ENCODE measurements at regions of chr9 and their contacts with region 1.

Region 1: GRCh38 chr9:89428901-89429890 is 68.7 kb downstream of the SEMA4D start:
- DNase-seq: no peak
- H3K4me3 ChIP-seq: no peak overlapping the region
- H3K27ac ChIP-seq: no peak overlapping the region
- H3K4me1 ChIP-seq: peaks cover 4% of the 10 kb centered on the region
- H3K27me3 ChIP-seq: no peaks in the 10 kb centered on the region
- CTCF ChIP-seq: no peak

Region 2: GRCh38 chr9:88829276-88829675 is 599.9 kb before region 1 on chr9:
- intact Hi-C with region 1: no loop called
- DNase-seq: no peak
- H3K4me3 ChIP-seq: no peak overlapping the region
- H3K27ac ChIP-seq: no peak overlapping the region
- H3K4me1 ChIP-seq: no peaks in the 10 kb centered on the region
- H3K27me3 ChIP-seq: no peaks in the 10 kb centered on the region
- CTCF ChIP-seq: no peak

Region 3: DNA sequence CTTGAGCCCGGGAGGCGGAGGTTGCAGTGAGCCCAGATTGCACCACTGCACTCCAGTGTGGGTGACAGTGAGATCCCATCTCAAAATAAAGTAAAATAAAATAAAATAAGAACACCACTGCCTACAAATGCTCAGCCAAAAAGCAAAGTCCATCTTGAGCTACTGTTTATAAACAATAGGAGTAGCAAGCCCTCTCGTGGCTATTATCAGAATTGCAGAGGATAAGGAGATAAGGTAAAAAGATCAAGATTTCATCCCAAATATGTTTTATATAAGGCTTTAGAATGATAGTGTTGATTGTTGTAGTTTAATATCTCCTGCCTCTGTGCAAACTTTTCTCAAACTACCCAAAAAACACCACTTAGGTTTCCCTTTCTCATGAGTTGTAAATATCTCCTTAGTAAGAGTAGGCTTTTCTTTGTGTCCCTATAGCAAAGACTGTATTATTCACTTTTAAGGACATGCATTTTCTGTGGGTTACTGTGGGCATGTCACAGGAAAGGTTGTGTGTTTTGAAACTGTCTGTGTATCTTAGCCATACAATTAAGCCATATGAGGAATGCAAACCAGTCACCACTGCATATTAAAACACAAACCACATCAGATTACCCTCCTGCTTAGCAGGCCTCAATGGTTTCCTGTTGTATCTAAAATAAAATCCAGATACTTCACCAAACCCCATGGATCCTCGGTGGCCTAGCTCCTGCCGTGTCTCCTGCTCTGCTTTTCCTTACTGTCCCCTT is 150.0 kb before region 1 on chr9:
- intact Hi-C with region 1: no loop called
- DNase-seq: peak; percentile 27
- H3K4me3 ChIP-seq: no peak overlapping the region
- H3K27ac ChIP-seq: no peak overlapping the region
- H3K4me1 ChIP-seq: no peaks in the 10 kb centered on the region
- H3K27me3 ChIP-seq: no peaks in the 10 kb centered on the region
- CTCF ChIP-seq: peak; percentile 79

Region 4: DNA sequence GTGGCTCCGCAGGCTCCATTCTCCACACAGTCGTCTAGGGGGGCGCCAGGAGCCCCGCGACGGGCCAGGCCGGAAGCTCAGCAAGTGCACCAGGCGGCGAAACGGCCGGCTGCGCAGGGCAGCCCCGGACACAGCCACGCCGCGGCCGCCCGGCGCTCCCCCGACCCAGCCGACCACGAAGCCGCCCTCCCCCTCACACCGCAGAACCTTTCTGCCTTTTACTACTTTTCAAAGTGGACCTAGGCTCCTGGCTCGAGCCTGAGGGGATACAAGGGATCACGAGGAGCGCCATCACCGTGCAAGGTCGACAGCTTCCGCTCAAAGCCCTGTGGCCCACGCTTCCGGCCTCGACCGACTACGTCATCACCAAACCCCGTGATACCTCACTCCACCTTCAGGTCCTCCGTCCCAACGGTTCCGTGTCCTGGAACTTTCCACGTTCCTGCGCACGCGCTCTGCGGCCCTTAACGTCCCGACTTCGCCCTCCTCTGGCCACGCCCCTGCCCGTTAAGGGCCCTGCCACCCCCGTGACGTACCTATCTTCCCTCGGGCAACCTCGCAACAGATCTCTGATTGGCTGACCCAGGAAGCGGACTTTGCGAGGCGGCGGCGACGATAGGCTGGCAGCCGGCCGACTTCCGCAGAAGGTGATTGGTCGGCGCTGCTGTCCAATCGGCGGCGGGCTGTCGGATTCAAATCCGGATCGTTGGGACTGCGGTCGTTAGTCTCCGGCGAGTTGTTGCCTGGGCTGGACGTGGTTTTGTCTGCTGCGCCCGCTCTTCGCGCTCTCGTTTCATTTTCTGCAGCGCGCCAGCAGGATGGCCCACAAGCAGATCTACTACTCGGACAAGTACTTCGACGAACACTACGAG is 118.5 kb before region 1 on chr9 and contains the start of gene CKS2:
- intact Hi-C with region 1: no loop called
- DNase-seq: peak; percentile 100
- H3K4me3 ChIP-seq: peak within 1 kb of the TSS; percentile 76
- H3K27ac ChIP-seq: peak within 1 kb of the TSS; percentile 99
- H3K4me1 ChIP-seq: no peaks in the 10 kb centered on the region
- H3K27me3 ChIP-seq: no peaks in the 10 kb centered on the region
- CTCF ChIP-seq: no peak
- total RNA-seq, gene CKS2: 42.4 to 134 TPM

Region 5: DNA sequence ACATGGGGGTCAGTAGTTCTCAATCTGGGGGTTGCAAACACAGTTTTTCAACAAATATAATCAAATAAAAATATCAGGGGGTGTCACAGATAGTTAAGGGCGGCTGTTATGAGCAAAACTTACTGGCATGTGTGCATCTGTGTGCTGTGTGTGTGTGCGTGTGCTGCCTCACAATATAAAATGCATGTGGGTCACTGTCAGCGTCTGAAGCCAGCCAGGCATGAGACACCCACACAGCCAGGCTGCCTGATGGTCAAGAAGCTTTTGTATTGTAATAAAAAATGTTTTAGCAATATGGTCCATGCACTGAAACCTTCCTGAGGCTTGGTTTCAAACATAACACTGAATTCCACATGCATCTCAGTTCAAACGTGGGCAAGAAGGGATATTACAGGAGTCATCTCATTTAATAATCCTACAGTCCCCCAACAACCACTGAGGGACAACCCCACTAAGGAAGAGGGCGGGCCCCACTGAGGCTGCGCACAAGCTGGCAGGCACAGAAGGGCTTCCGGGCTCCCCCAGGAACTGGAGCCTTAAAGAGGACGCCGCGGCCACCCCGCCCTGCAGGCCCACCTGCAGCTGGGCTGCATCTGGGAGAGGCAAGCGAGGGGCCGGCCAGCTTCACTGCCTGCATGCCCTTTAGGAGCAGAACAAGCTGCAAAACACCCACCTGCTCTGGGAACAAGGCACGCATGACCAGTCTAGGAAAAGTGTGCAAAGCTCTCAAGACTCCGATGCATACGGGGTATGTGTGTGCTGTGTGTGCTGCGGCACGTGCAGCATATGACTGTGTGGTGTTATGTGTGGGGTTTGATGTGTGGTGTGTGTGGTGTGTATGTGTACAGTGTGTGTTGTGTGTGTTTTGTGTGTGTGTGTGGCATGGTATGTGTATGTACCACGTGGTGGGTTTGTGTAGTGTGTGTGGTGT is 54.7 kb after region 1 on chr9:
- intact Hi-C with region 1: loop called (anchors 10 kb)
- DNase-seq: no peak
- H3K4me3 ChIP-seq: no peak overlapping the region
- H3K27ac ChIP-seq: no peak overlapping the region
- H3K4me1 ChIP-seq: no peaks in the 10 kb centered on the region
- H3K27me3 ChIP-seq: no peaks in the 10 kb centered on the region
- CTCF ChIP-seq: no peak

Measured in colonic mucosa (tissue), 4 donors.